Cardiac septum (tissue), 1 donor: ENCODE measurements at regions of chr4 and their contacts with region 1.

Region 1: DNA sequence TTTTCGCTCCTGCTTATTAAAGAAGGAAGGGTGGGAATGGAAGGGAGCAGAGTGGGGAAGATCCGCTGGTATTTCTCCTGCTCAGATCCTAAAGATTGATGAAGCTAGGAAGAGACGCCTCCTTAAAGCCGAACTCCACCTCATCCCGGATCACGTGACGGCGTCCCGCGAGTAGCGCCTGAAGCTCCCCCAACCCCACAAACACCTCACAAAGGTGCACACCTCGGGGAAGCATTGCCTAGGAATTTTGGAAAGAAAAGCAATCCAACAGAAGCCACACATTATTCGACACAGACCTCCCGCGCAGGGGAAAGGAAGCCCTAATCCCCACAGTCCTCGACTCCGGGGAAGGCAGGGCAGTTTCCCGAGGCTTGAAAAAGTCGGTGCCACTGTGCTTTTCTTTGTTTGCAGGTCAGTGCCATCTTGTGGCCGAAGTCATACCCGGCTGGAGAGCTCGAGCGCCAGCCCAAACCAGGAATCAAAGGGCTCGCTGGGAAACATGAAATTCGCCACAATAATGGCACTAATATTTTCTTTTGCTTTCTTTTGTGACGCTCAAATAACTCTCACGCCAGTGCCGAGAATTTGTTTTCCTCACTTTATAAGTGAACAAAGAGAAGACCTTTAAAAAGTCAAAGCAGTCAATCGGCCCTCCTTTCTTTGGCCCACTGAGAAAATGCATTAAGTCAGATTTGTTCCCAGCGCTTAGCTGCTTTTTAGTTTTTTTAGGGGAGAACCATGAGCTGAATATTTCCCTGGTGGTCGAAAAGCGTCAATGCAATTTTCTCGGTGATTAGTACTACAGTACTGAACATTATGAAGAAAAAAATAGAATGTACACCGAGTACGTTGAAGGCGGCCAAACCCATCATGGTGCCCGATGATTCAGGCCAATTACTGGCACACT is at the start of gene NPY1R:
- DNase-seq: peak; percentile 78
- total RNA-seq, gene NPY1R: 1.6 TPM

Region 2: GRCh38 chr4:162497564-162498167 is 835.1 kb before region 1 on chr4:
- intact Hi-C with region 1: loop called (anchors 2 kb)
- DNase-seq: no peak

Region 3: GRCh38 chr4:162645381-162645780 is 687.4 kb before region 1 on chr4:
- intact Hi-C with region 1: loop called (anchors 10 kb)
- DNase-seq: no peak

Region 4: GRCh38 chr4:163107754-163108153 is 225.0 kb before region 1 on chr4:
- intact Hi-C with region 1: loop called (anchors 10 kb)
- DNase-seq: no peak